Activated T-helper 1 cell treated with anti-CD3 and anti-CD28 coated beads, Interleukin-12 subunit alpha, Interleukin-12 subunit beta, Interleukin-2, Interleukin-4 antibody, amounts not matched to agents 30 ng/mL and 10 ng/mL and 1 ng/mL, durations not matched to agents 14 hours and 24 hours and 36 hours (primary cell): ENCODE measurements at regions of chr20 and their contacts with region 1.

Region 1: DNA sequence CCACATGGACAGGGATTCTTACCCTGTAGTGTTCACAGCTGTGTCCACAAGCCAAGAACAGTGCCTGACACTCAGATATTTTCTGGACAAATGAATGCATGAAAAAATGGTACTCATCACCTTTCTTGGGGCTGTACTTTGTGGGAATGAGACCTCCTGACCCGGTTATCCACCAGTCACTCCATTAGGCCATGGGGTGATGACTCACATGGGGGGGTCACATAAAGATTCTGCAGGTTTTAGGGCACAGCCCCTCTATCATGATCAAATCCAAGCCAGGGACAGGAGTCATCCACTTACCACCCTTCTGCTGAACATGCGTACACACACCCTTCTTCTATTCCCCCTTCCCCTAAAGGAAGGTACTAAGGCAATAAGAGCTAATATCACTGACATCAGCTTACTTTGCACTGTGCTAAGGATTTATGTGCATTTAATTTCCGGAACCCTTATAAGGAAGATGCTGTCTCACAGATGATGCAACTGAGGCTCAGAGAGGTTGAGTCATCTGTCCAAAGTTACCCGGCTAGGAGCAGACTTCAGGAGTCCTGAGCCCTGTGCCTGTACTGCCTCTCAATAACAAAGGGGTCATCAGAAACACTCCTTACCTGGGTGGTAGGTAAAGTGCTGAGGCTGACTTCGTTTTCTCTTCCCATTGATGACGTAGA is 107.8 kb downstream of the NFATC2 start:
- DNase-seq: no peak
- H3K4me3 Mint-ChIP-seq: no peak overlapping the region
- H3K27ac Mint-ChIP-seq: peak overlapping the region; percentile 12
- H3K4me1 Mint-ChIP-seq: peaks cover 63% of the 10 kb centered on the region
- H3K27me3 Mint-ChIP-seq: no peaks in the 10 kb centered on the region

Region 2: GRCh38 chr20:51423290-51423667 is 11.4 kb before region 1 on chr20:
- intact Hi-C with region 1: loop called (anchors 2 kb)
- DNase-seq: no peak
- H3K4me3 Mint-ChIP-seq: peak overlapping the region; percentile 22
- H3K27ac Mint-ChIP-seq: peak overlapping the region; percentile 72
- H3K4me1 Mint-ChIP-seq: peaks cover 77% of the 10 kb centered on the region
- H3K27me3 Mint-ChIP-seq: no peaks in the 10 kb centered on the region